Activated T-helper 1 cell treated with anti-CD3 and anti-CD28 coated beads, Interleukin-12 subunit alpha, Interleukin-12 subunit beta, Interleukin-2, Interleukin-4 antibody, amounts not matched to agents 30 ng/mL and 10 ng/mL and 1 ng/mL, durations not matched to agents 14 hours and 24 hours and 36 hours (primary cell): ENCODE measurements at regions of chrX and their contacts with region 1.

Region 1: GRCh38 chrX:47658684-47659515 is at the start of gene UXT:
- DNase-seq: peak; percentile 89
- H3K4me3 Mint-ChIP-seq: peak within 1 kb of the TSS; percentile 90
- H3K27ac Mint-ChIP-seq: peak within 1 kb of the TSS; percentile 98
- H3K4me1 Mint-ChIP-seq: peaks cover 31% of the 10 kb centered on the region
- H3K27me3 Mint-ChIP-seq: no peaks in the 10 kb centered on the region
- total RNA-seq, gene UXT: 163 and 173 TPM in 2 replicates

Region 2: GRCh38 chrX:47144626-47145394 is 514.1 kb before region 1 on chrX and contains the starts of genes NDUFB11 and RBM10:
- intact Hi-C with region 1: loop called (anchors 2 kb)
- DNase-seq: peak; percentile 89
- H3K4me3 Mint-ChIP-seq: peak within 1 kb of the TSS; percentile 100
- H3K27ac Mint-ChIP-seq: peak within 1 kb of the TSS; percentile 100
- H3K4me1 Mint-ChIP-seq: peaks cover 18% of the 10 kb centered on the region
- H3K27me3 Mint-ChIP-seq: peaks cover 2% of the 10 kb centered on the region
- total RNA-seq, gene NDUFB11: 84.5 and 88.7 TPM in 2 replicates
- total RNA-seq, gene RBM10: 62.0 and 64.1 TPM in 2 replicates

Region 3: DNA sequence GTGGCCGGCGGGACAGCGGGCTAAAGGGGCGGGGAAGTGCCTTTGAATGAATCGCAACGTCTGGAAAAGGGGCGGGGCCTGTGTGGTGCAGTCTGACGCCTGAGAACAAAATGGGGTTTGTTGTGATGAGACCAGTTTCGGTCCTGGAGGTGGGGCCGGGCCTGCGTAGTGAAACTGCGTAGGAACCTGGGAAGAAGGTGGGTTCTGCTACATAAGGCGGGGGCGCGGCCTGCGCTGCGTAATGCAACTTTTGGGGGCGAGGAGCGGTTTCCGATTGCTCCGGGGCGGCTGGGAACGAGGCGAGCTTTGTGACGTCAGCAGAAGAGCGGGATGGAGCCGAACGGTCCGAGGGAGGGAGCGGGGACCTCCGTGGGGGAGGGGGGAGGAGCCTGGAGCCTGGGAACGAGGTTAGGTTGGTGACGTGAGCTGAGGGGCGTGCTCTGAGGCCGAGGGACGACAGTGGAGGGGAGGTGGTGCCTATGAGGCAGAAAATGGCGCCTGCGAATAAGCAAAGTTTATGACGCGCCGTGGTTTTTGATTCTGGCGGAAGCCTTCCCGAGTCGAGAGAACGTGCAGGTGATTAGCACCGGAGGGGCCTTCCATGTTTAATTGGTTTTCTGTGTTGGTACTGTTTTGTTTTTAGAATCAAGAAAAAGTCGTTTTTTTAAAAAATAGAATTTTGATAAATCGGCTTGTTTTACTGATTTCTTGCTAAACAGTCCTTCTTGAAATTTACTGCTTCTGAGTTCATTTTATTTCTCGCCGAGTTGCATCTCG is 425.4 kb before region 1 on chrX:
- intact Hi-C with region 1: loop called (anchors 2 kb)
- DNase-seq: peak; percentile 87
- H3K4me3 Mint-ChIP-seq: peak overlapping the region; percentile 87
- H3K27ac Mint-ChIP-seq: peak overlapping the region; percentile 90
- H3K4me1 Mint-ChIP-seq: peaks cover 19% of the 10 kb centered on the region
- H3K27me3 Mint-ChIP-seq: no peaks in the 10 kb centered on the region

Region 4: GRCh38 chrX:47581731-47582647 is 76.9 kb before region 1 on chrX and contains the start of gene TIMP1:
- intact Hi-C with region 1: loop called (anchors 1 kb)
- DNase-seq: peak; percentile 78
- H3K4me3 Mint-ChIP-seq: peak within 1 kb of the TSS; percentile 67
- H3K27ac Mint-ChIP-seq: peak within 1 kb of the TSS; percentile 67
- H3K4me1 Mint-ChIP-seq: peaks cover 46% of the 10 kb centered on the region
- H3K27me3 Mint-ChIP-seq: peaks cover 3% of the 10 kb centered on the region
- total RNA-seq, gene TIMP1: 61.7 and 70.1 TPM in 2 replicates

Region 5: DNA sequence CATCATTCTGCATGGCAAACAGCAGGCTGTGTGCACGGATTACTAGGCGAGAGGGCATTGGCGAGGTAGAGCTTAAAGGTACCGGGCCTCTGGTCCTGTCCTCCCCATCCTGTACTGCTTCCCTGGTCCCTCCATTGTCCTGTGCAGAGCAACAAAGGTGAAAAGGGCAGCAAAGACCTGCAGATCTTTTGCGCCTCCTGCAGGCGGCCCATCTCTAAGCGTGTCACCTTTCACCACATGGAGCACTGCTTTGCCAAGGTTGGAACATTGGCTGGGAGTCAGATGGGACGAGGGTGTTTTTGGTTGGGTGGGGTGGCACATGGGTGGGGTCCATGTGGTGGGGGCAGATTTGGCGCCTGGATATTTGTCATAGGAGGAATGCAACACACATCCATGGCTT is 64.8 kb after region 1 on chrX:
- intact Hi-C with region 1: loop called (anchors 5 kb)
- DNase-seq: peak; percentile 0
- H3K4me3 Mint-ChIP-seq: no peak overlapping the region
- H3K27ac Mint-ChIP-seq: no peak overlapping the region
- H3K4me1 Mint-ChIP-seq: no peaks in the 10 kb centered on the region
- H3K27me3 Mint-ChIP-seq: peaks cover 2% of the 10 kb centered on the region

Region 6: GRCh38 chrX:48021026-48021900 is 362.4 kb after region 1 on chrX:
- intact Hi-C with region 1: loop called (anchors 2 kb)
- DNase-seq: peak; percentile 54
- H3K4me3 Mint-ChIP-seq: peak overlapping the region; percentile 92
- H3K27ac Mint-ChIP-seq: peak overlapping the region; percentile 97
- H3K4me1 Mint-ChIP-seq: peaks cover 6% of the 10 kb centered on the region
- H3K27me3 Mint-ChIP-seq: peaks cover 7% of the 10 kb centered on the region